ENCODE measurements at regions of chr1 and their contacts with region 1.

Region 1: GRCh38 chr1:207828485-207829158 is 76.8 kb downstream of the CD46 start:
- DNase-seq: peak; percentile 59 to 76 (median 64)
- H3K4me3 ChIP-seq: no peak overlapping the region
- H3K27ac ChIP-seq: peak overlapping the region in 1 of 2 donors; percentile 8
- H3K4me1 ChIP-seq: peaks cover 24% of the 10 kb centered on the region
- H3K27me3 ChIP-seq: no peaks in the 10 kb centered on the region
- CTCF ChIP-seq: peak; percentile 36 to 79 (median 68)
- EP300 ChIP-seq: no peak
- POLR2A ChIP-seq: no peak

Region 2: GRCh38 chr1:207868774-207869721 is 40.4 kb after region 1 on chr1:
- intact Hi-C with region 1: loop called (anchors 2 to 5 kb)
- DNase-seq: peak; percentile 79 to 91 (median 86)
- H3K4me3 ChIP-seq: peak overlapping the region; percentile 89
- H3K27ac ChIP-seq: peak overlapping the region; percentile 95 to 99
- H3K4me1 ChIP-seq: peaks cover 17% of the 10 kb centered on the region
- H3K27me3 ChIP-seq: no peaks in the 10 kb centered on the region
- CTCF ChIP-seq: peak; percentile 36 to 97 (median 94)
- EP300 ChIP-seq: peak; percentile 27
- POLR2A ChIP-seq: peak; percentile 80

Region 3: GRCh38 chr1:208329300-208329699 is 500.7 kb after region 1 on chr1:
- intact Hi-C with region 1: no loop called
- DNase-seq: no peak
- H3K4me3 ChIP-seq: no peak overlapping the region
- H3K27ac ChIP-seq: no peak overlapping the region
- H3K4me1 ChIP-seq: no peaks in the 10 kb centered on the region
- H3K27me3 ChIP-seq: no peaks in the 10 kb centered on the region
- CTCF ChIP-seq: no peak
- EP300 ChIP-seq: no peak
- POLR2A ChIP-seq: no peak